Activated B cell treated with CpG ODN at 0.5 μM for 24 hours (primary cell): ENCODE measurements at regions of chr10 and their contacts with region 1.

Region 1: DNA sequence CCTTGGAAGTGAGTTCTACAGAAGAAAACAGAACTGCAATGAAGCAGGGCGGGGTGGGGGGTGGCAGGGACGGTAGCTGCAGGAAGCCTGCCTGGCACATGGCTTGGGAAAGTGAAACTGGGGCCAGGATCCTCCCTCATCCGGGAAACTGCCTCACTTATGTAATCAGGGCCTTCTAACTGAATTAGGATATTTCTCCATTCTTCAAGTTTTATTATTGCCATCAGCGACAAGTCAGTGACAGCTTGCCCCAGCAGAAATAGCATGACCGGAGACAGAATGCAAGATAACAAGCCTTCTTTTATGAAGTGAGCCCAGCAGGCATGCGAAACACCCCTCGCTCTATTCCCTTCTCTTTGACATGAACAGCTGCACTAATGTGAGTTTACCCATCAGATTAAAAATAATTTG is 77.5 kb upstream of the CACUL1 start:
- DNase-seq: no peak
- ATAC-seq: no peak
- H3K4me3 Mint-ChIP-seq: no peak overlapping the region
- H3K27ac Mint-ChIP-seq: no peak overlapping the region
- H3K4me1 Mint-ChIP-seq: peaks cover 3% of the 10 kb centered on the region
- H3K27me3 Mint-ChIP-seq: peaks cover 11% of the 10 kb centered on the region
- CTCF ChIP-seq: no peak

Region 2: DNA sequence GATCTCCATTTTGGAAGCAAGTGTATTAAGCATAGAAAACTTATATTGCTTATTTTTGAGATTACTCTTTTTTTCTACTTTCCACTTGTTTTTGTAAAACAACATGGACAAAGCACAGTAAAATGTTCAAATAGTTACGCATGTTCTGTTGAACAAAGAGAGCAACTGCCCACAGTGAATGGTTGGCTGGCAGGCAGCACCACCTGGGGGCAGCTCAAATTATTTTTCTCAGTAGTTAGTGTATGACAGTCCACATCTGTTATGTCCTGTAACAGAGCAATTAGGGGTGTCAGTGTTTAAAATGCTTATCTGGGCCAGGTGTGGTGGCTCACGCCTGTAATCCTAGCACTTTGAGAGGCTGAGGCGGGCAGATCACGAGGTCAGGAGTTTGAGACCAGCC is 31.3 kb before region 1 on chr10:
- CTCF ChIA-PET with region 1: no interaction called
- POLR2A ChIA-PET with region 1: interaction called, 10 read pairs
- intact Hi-C with region 1: no loop called
- DNase-seq: no peak
- ATAC-seq: no peak
- H3K4me3 Mint-ChIP-seq: no peak overlapping the region
- H3K27ac Mint-ChIP-seq: no peak overlapping the region
- H3K4me1 Mint-ChIP-seq: no peaks in the 10 kb centered on the region
- H3K27me3 Mint-ChIP-seq: peaks cover 2% of the 10 kb centered on the region
- CTCF ChIP-seq: no peak

Region 3: DNA sequence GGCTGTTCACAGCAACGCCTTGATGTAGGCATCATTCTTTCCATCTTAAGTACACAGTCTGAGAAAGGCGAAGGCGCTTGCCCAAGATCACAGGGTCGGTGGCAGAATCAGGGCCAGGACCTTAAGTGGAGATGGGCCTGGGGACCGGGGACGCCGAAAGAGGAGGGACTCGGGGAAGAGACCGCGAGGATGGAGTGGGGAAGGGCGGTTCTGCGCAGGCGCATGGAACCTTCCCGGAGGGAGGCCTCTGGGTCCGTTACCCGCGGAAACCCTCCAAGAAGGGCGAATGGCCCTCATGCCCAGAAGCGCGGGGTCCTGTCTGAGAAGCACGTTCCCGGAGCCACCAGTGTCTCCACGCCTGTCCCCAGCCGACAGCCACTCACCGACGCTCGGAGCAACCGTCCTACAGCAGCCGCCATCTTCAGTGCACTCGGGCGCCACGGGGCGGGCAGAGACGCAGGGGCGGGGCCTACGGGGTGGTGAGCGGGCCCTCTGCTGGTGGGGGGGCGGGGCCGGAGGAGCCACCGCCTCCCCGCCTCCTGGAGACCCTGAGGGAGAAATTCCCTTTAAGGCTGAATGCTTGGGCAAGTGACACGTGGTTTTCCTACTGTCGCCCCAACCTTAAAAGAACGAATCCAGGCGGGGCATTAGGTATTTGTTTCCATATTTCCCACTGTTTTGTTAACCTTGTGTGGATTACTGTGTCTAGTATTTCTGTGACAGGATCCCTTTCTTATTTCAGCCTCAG is 346.3 kb after region 1 on chr10 and contains the start of gene PRDX3:
- CTCF ChIA-PET with region 1: no interaction called
- POLR2A ChIA-PET with region 1: no interaction called
- intact Hi-C with region 1: no loop called
- DNase-seq: peak; percentile 92
- ATAC-seq: peak; percentile 99
- H3K4me3 Mint-ChIP-seq: peak within 1 kb of the TSS; percentile 98
- H3K27ac Mint-ChIP-seq: peak within 1 kb of the TSS; percentile 93
- H3K4me1 Mint-ChIP-seq: peaks cover 26% of the 10 kb centered on the region
- H3K27me3 Mint-ChIP-seq: no peaks in the 10 kb centered on the region
- CTCF ChIP-seq: no peak
- total RNA-seq, gene PRDX3: 62.8 and 63.7 TPM in 2 replicates